Posterior cingulate gyrus (tissue), 11 donors: ENCODE measurements at regions of chr6 and their contacts with region 1.

Region 1: GRCh38 chr6:62775427-62776022 is 435.7 kb upstream of the FKBP1C start:
- DNase-seq: no peak

Region 2: DNA sequence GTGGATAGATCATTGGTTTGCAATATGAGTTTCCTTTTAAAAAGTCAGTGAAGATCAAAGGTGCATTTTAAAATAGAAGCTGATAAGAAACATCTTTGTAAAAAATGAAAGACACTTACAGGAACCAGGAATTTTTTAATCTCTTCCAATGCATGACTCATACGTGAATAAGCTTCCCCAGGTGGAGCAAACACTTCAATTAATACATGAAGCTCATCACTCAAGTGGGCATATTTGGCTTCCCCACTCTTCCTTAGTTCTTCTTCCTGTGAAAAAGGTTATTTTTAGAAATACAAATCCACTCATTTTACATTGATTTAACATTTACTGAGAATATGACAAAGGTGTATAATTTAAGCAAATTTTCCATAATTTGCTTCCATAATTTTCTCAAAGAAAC is 797.6 kb before region 1 on chr6:
- intact Hi-C with region 1: no loop called
- DNase-seq: no peak

Region 3: GRCh38 chr6:62746968-62747367 is 28.6 kb before region 1 on chr6:
- intact Hi-C with region 1: loop called (anchors 2 kb)
- DNase-seq: peak in 3 of 10 donors; percentile 6 to 71 (median 35)